ENCODE measurements at regions of chr15 and their contacts with region 1.

Region 1: DNA sequence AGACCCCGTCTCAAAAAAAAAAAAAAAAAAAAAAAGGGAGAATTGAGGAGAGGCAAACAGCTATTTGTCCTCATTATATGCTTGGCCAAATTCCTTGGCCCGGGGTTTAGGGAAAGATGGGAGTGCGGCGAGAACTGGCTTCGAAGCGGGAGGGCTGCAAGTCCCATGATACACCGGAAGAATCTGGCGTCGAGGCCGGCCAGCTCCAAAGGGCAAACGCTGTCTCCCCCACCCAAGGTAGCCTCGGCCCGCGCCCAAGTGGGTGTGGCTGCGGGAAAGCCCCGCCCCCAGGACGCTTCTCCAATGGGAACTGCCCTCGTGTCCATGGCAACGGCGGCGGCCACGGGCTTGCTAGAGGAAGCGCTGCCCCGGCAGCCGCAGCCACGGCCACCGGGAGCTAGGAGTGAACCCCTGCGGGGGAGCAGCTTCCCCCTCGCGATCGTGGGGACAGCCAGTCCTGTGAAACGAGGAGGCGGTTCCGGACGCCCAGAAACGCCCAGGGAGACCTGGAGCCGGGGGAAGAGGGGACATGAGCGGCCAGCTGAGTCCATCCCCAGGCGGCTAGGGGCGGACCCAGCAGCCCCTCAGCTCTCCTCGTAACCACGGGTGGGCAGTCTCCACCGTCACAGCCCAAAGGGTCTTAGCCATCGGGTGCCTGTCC is at the start of gene TTLL13:
- DNase-seq: peak; percentile 78
- H3K4me3 Mint-ChIP-seq: peak within 1 kb of the TSS; percentile 73
- H3K27ac Mint-ChIP-seq: no peak within 1 kb of the TSS
- H3K4me1 Mint-ChIP-seq: peaks cover 11% of the 10 kb centered on the region
- H3K27me3 Mint-ChIP-seq: no peaks in the 10 kb centered on the region
- total RNA-seq, gene TTLL13: 0.34 and 1.3 TPM in 2 replicates

Region 2: GRCh38 chr15:90233376-90234095 is 15.8 kb before region 1 on chr15 and contains the start of gene CIB1:
- intact Hi-C with region 1: no loop called
- DNase-seq: peak; percentile 97
- H3K4me3 Mint-ChIP-seq: peak within 1 kb of the TSS; percentile 92
- H3K27ac Mint-ChIP-seq: peak within 1 kb of the TSS; percentile 86
- H3K4me1 Mint-ChIP-seq: peaks cover 35% of the 10 kb centered on the region
- H3K27me3 Mint-ChIP-seq: no peaks in the 10 kb centered on the region
- total RNA-seq, gene CIB1: 159 and 162 TPM in 2 replicates

Region 3: DNA sequence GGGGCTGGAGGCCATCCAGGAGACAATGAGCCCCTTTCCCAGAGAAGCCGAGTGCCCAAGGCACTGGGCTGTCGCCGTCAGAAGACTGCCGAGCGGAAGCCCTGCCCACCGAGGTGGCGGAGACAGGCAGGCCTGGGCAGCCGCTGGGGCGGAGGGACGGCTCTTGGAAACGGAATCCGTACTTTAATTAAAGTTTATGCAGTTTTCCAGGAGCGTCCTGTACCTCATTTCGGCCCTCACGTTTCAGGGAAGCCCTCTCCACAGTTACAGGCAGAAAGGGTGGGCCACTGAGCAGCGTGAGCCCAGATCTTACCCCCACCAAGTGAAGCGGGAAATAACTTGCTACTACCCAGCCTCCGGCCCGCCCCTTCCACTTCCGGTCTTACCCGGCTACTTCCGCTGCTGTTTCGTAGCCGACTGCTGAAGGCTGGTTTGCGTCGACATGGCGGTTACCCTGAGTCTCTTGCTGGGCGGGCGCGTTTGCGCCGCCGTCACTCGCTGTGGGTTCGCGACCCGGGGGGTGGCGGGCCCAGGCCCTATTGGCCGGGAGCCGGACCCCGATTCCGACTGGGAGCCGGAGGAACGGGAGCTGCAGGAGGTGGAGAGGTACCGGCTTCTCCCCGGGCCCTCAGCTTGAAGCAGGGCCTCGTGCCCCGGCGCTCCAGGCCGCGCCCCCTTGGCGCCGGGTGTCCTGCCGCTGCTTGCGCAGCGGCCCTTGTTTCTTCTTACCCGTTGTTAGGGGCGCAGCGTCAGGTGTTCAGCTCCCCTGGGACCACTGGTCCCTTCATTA is 16.1 kb after region 1 on chr15 and contains the start of gene NGRN:
- intact Hi-C with region 1: loop called (anchors 1 kb)
- DNase-seq: peak; percentile 91
- H3K4me3 Mint-ChIP-seq: peak within 1 kb of the TSS; percentile 97
- H3K27ac Mint-ChIP-seq: peak within 1 kb of the TSS; percentile 96
- H3K4me1 Mint-ChIP-seq: peaks cover 36% of the 10 kb centered on the region
- H3K27me3 Mint-ChIP-seq: no peaks in the 10 kb centered on the region
- total RNA-seq, gene NGRN: 37.1 and 40.3 TPM in 2 replicates

Region 4: DNA sequence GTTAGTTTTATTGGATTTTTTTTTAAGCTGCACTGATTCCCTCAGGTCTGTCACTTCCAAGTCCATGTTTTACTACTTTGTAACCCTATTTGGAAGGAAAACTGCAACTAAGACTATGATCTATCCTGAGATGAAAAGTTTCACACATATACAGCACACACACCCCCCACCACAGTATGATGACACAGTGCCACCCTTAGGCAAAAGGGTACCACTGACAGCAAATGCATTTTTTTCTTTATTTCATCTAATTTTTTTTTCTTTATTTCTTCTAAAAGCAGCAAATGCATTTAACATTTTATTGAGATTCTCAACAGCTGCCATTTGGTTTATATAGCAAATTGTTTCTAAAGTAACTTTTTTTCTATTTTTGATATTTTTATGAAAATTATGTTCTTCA is 37.3 kb after region 1 on chr15:
- intact Hi-C with region 1: no loop called
- DNase-seq: no peak
- H3K4me3 Mint-ChIP-seq: no peak overlapping the region
- H3K27ac Mint-ChIP-seq: no peak overlapping the region
- H3K4me1 Mint-ChIP-seq: peaks cover 1% of the 10 kb centered on the region
- H3K27me3 Mint-ChIP-seq: peaks cover 2% of the 10 kb centered on the region

Region 5: DNA sequence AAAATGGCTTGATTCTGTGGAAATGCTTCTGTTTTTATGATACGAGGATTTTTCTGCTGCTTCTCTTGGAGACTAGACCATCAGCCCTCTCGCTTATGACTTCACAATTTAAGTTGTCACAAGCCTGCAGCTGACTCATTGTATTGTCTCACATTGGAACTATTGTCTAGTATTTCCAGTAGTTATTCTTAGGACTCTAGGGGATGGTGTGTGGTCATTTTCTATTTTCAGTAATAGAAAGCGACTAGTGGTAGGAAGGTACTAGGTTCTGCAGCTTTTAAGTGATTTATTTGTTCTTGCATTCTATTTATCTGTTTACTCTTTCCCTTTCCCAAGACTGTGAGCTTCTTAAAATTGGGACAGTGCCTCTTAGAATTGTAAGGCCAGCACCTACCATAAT is 214.0 kb after region 1 on chr15:
- intact Hi-C with region 1: no loop called
- DNase-seq: no peak
- H3K4me3 Mint-ChIP-seq: no peak overlapping the region
- H3K27ac Mint-ChIP-seq: no peak overlapping the region
- H3K4me1 Mint-ChIP-seq: peaks cover 30% of the 10 kb centered on the region
- H3K27me3 Mint-ChIP-seq: no peaks in the 10 kb centered on the region